ENCODE measurements at regions of chr18 and their contacts with region 1.

Region 1: GRCh38 chr18:58781627-58782194 is 83.0 kb upstream of the ZNF532 start:
- DNase-seq: peak; percentile 85 to 87
- ATAC-seq: peak; percentile 83
- H3K4me3 ChIP-seq: no peak overlapping the region
- H3K27ac ChIP-seq: peak overlapping the region in 1 of 2 donors; percentile 78
- H3K4me1 ChIP-seq: no peaks in the 10 kb centered on the region
- H3K27me3 ChIP-seq: no peaks in the 10 kb centered on the region

Region 2: GRCh38 chr18:58310517-58310916 is 471.2 kb before region 1 on chr18:
- intact Hi-C with region 1: no loop called
- DNase-seq: no peak
- ATAC-seq: no peak
- H3K4me3 ChIP-seq: no peak overlapping the region
- H3K27ac ChIP-seq: no peak overlapping the region
- H3K4me1 ChIP-seq: no peaks in the 10 kb centered on the region
- H3K27me3 ChIP-seq: no peaks in the 10 kb centered on the region

Region 3: DNA sequence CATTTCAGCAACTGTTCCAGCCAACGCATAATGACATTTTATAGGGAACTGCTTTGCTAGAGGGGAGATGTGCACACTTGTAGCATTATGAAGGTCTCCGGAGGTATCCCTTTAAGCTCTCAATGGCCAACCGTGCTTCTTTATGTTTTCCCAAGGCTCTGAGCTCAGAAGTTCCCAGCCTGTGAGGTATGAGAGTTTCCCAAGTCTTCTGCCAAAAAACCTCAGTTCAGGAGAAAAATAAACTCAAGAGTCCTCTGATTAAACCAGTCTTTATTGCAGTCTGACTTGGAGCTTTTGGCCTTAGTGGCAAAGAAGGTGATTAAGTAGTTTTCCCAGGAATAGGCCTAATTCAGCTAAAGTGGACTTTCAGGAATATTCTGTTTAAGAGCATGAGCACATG is 47.6 kb after region 1 on chr18:
- intact Hi-C with region 1: loop called in 1 of 2 experiments (anchors 5 kb)
- DNase-seq: no peak
- ATAC-seq: peak; percentile 50
- H3K4me3 ChIP-seq: no peak overlapping the region
- H3K27ac ChIP-seq: peak overlapping the region; percentile 52 to 83
- H3K4me1 ChIP-seq: peaks cover 0 to 2% of the 10 kb centered on the region in 2 donors
- H3K27me3 ChIP-seq: no peaks in the 10 kb centered on the region

Region 4: DNA sequence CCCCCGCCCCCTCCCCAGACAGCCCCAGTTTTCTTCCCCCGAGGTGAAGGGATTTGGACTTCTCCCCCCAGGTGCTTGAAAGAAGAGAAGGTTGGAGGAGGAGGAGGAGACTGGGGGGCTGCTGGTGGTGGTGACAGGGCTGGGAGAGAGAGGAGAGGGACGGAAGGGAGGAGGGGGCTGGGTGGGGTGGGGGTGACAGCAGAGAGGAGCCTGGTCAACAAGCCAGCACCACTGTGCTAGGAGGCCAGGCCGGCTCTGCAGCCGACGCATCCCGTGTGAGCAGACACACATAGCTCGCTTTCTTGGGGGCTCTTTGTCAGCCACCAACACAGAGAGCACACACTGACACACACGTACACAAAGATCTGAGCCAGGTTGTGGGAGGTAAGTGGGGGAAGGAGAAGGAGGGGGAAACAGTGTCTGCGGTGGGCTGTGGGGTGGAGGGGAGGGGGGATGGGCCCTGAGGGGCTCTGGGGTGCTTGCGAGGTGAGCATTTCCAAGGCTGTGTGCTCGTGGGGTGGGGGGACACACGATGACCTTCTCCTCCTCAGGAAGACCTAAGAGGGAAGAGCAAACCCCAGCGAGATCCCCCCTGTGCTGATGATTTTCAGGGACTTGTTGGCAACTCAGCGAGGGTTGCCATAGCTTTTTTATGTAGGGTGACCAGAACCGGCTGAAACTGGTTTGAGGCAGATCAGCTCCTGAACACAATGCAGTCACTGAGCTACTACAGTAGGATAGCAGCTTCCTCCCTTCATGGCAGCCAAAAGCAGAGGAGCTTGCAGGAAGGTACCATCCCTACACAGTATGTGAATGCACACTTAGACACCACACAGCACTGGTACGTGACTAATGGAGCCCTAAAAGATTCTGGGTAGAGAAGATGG is 82.7 kb after region 1 on chr18 and contains the start of gene ZNF532:
- intact Hi-C with region 1: loop called (anchors 5 kb)
- DNase-seq: peak in 1 of 2 donors; percentile 62
- ATAC-seq: peak; percentile 65
- H3K4me3 ChIP-seq: peak within 1 kb of the TSS; percentile 29 to 74
- H3K27ac ChIP-seq: peak within 1 kb of the TSS; percentile 99 to 100
- H3K4me1 ChIP-seq: peaks cover 2 to 15% of the 10 kb centered on the region in 2 donors
- H3K27me3 ChIP-seq: no peaks in the 10 kb centered on the region
- total RNA-seq, gene ZNF532: 183 to 194 TPM

Region 5: DNA sequence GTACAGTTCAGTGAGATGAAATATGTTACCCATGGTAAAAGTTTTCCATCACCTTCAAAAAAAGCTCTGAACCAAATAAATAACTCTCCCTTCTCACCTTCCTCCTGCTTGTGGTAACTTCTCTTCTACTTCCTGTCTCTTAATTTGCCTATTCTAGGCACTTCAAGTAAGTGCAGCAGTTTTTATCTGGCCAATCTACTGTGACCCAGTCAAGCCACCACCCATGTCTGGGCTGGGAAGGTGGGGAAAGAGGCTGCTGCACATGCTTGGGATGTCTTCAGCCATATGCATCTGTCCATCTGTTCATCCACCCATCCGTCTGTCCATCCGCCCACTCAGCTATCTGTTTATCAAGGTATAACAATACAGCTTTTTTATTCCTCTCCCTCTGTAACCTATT is 114.6 kb after region 1 on chr18:
- intact Hi-C with region 1: loop called in 1 of 2 experiments (anchors 5 kb)
- DNase-seq: no peak
- ATAC-seq: no peak
- H3K4me3 ChIP-seq: no peak overlapping the region
- H3K27ac ChIP-seq: no peak overlapping the region
- H3K4me1 ChIP-seq: peaks cover 2 to 9% of the 10 kb centered on the region in 2 donors
- H3K27me3 ChIP-seq: no peaks in the 10 kb centered on the region

Region 6: GRCh38 chr18:58998401-58999203 is 216.9 kb after region 1 on chr18:
- intact Hi-C with region 1: loop called (anchors 2 to 5 kb)
- DNase-seq: peak; percentile 80 to 85
- ATAC-seq: peak; percentile 70
- H3K4me3 ChIP-seq: peak overlapping the region in 1 of 2 donors; percentile 23
- H3K27ac ChIP-seq: peak overlapping the region; percentile 85 to 88
- H3K4me1 ChIP-seq: peaks cover 2 to 7% of the 10 kb centered on the region in 2 donors
- H3K27me3 ChIP-seq: no peaks in the 10 kb centered on the region

Region 7: GRCh38 chr18:59056706-59057492 is 275.2 kb after region 1 on chr18:
- intact Hi-C with region 1: loop called (anchors 2 kb)
- DNase-seq: peak; percentile 88 to 91
- ATAC-seq: peak; percentile 73
- H3K4me3 ChIP-seq: no peak overlapping the region
- H3K27ac ChIP-seq: no peak overlapping the region
- H3K4me1 ChIP-seq: peaks cover 1 to 8% of the 10 kb centered on the region in 2 donors
- H3K27me3 ChIP-seq: no peaks in the 10 kb centered on the region

Region 8: GRCh38 chr18:59070181-59070912 is 288.6 kb after region 1 on chr18:
- intact Hi-C with region 1: loop called in 1 of 2 experiments (anchors 2 kb)
- DNase-seq: peak; percentile 91 to 96
- ATAC-seq: peak; percentile 82
- H3K4me3 ChIP-seq: no peak overlapping the region
- H3K27ac ChIP-seq: no peak overlapping the region
- H3K4me1 ChIP-seq: no peaks in the 10 kb centered on the region
- H3K27me3 ChIP-seq: no peaks in the 10 kb centered on the region

Region 9: GRCh38 chr18:59083136-59083818 is 301.6 kb after region 1 on chr18:
- intact Hi-C with region 1: no loop called
- DNase-seq: no peak
- ATAC-seq: no peak
- H3K4me3 ChIP-seq: no peak overlapping the region
- H3K27ac ChIP-seq: no peak overlapping the region
- H3K4me1 ChIP-seq: no peaks in the 10 kb centered on the region
- H3K27me3 ChIP-seq: no peaks in the 10 kb centered on the region